Transverse colon (tissue), 4 donors: ENCODE measurements at regions of chr15 and their contacts with region 1.

Region 1: DNA sequence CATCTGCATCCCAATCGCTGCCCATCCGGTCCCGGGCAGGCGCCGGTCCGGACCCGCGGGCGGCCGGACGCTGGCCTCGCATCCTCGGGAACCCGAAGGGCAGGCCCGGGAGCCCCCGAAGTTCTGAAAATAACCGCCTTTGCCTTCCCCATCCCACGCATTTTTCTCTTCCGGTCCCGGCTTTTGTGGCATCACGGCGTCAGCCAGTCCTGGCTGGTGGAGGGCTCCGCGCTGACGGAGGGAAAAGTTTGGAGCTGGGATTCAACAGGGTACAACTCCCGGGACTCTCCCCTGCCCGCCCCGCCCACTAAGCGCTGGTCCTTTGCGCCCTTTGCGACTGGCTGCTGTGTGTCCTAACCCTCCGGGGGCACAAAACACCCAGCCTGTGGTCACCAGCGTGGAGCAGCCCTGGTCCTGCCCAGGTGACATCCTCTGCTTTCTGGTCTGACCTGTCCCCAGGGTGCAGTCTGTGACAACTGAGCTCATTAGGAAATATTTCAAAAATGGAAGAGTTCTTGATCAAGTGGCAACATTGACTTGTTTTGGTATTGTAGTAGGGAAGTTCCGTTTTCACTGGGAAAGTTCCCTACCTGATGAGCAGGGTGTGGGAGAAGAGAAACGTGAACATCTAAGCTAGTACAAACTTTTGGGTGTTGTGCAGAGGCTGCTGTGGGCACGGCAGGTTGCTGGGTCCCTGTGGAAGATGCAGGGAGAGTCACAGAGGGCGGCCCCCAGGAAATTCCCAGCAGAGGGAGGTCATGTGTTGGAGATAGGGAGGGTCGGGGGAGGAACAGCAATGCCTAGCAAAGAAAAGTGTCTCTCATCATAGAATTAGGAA is 753 bp downstream of the ARNT2 start:
- DNase-seq: no peak
- H3K4me3 ChIP-seq: peak overlapping the region; percentile 20 to 55 (median 51)
- H3K27ac ChIP-seq: peak overlapping the region in 2 of 4 donors; percentile 30 to 55
- H3K4me1 ChIP-seq: peaks cover 0 to 6% (median 5%) of the 10 kb centered on the region in 4 donors
- H3K27me3 ChIP-seq: peaks cover 46% of the 10 kb centered on the region
- CTCF ChIP-seq: no peak
- EP300 ChIP-seq: no peak
- POLR2A ChIP-seq: no peak

Region 2: GRCh38 chr15:79130535-79131130 is 1274.3 kb before region 1 on chr15:
- in situ Hi-C with region 1: no loop called
- intact Hi-C with region 1: no loop called
- DNase-seq: no peak
- H3K4me3 ChIP-seq: no peak overlapping the region
- H3K27ac ChIP-seq: no peak overlapping the region
- H3K4me1 ChIP-seq: no peaks in the 10 kb centered on the region
- H3K27me3 ChIP-seq: peaks cover 6% of the 10 kb centered on the region
- CTCF ChIP-seq: no peak
- EP300 ChIP-seq: no peak
- POLR2A ChIP-seq: no peak

Region 3: DNA sequence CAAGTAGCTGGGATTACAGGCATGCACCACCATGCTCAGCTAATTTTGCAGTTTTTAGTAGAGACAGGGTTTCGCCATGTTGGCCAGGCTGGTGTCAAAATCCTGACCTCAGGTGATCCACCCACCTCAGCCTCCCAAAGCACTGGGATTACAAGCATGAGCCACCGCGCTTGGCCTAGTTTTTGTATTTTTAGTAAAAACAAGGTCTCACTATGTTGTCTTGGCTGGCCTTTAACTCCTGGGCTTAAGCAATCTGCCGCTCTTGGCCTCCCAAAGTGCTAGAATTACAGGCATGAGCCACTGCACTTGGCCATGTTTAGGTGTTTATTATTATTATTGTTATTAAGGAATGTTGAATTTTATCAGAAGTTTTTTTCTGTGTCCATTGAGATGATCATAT is 806.4 kb after region 1 on chr15:
- in situ Hi-C with region 1: no loop called
- intact Hi-C with region 1: loop called (anchors 5 kb)
- DNase-seq: no peak
- H3K4me3 ChIP-seq: no peak overlapping the region
- H3K27ac ChIP-seq: no peak overlapping the region
- H3K4me1 ChIP-seq: no peaks in the 10 kb centered on the region
- H3K27me3 ChIP-seq: no peaks in the 10 kb centered on the region
- CTCF ChIP-seq: no peak
- EP300 ChIP-seq: no peak
- POLR2A ChIP-seq: no peak